PC-9 (cell line): ENCODE measurements at regions of chr15 and their contacts with region 1.

Region 1: GRCh38 chr15:60592371-60593169 is 113.6 kb upstream of the ICE2 start:
- DNase-seq: peak; percentile 67
- H3K4me3 ChIP-seq: peak overlapping the region; percentile 68
- H3K27ac ChIP-seq: no peak overlapping the region
- H3K4me1 ChIP-seq: peaks cover 4% of the 10 kb centered on the region; the same call in 1 of the 2 replicates
- H3K27me3 ChIP-seq: no peaks in the 10 kb centered on the region
- CTCF ChIP-seq: no peak; the same call in 1 of the 2 replicates

Region 2: DNA sequence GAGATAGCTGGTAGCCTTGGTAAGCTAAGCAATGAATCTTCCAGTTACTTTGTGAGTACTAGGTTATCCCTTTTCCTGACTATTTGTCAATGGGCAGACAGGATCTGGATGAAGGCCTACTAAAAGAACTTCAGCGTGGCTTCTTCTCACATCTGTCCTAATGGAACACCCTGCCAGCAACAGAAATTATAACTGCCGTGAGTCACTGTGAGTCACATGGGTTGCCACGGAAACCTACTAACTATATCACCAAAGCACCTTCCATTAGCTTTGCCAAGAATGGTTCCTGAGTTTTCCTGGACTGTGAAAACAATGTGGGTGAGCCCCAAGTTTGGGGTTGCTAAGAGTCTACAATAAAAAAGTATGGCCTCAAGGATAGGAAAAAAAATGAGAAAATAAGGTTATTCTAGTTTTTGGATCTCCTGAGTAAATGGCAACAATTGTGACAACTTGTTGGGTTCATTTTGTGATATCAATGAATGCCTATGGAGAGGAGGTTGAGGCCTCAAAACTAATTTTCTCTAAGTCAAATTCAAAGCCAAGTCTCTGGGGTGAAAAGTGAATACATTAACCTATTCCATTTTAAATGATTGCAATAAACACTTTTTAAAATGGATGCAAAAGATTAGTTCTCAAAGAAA is 81.5 kb after region 1 on chr15:
- CTCF ChIA-PET with region 1: no interaction called
- POLR2A ChIA-PET with region 1: no interaction called
- intact Hi-C with region 1: loop called (anchors 10 kb)
- DNase-seq: peak; percentile 60 to 81
- H3K4me3 ChIP-seq: no peak overlapping the region
- H3K27ac ChIP-seq: no peak overlapping the region
- H3K4me1 ChIP-seq: peaks cover 9% of the 10 kb centered on the region
- H3K27me3 ChIP-seq: no peaks in the 10 kb centered on the region
- CTCF ChIP-seq: no peak

Region 3: GRCh38 chr15:62306851-62307504 is 1714.4 kb after region 1 on chr15:
- CTCF ChIA-PET with region 1: no interaction called
- POLR2A ChIA-PET with region 1: no interaction called
- intact Hi-C with region 1: loop called (anchors 5 kb)
- DNase-seq: peak; percentile 29 to 38
- H3K4me3 ChIP-seq: no peak overlapping the region
- H3K27ac ChIP-seq: no peak overlapping the region
- H3K4me1 ChIP-seq: no peaks in the 10 kb centered on the region
- H3K27me3 ChIP-seq: no peaks in the 10 kb centered on the region
- CTCF ChIP-seq: peak; percentile 73